BJ (cell line): ENCODE measurements at regions of chr3 and their contacts with region 1.

Region 1: DNA sequence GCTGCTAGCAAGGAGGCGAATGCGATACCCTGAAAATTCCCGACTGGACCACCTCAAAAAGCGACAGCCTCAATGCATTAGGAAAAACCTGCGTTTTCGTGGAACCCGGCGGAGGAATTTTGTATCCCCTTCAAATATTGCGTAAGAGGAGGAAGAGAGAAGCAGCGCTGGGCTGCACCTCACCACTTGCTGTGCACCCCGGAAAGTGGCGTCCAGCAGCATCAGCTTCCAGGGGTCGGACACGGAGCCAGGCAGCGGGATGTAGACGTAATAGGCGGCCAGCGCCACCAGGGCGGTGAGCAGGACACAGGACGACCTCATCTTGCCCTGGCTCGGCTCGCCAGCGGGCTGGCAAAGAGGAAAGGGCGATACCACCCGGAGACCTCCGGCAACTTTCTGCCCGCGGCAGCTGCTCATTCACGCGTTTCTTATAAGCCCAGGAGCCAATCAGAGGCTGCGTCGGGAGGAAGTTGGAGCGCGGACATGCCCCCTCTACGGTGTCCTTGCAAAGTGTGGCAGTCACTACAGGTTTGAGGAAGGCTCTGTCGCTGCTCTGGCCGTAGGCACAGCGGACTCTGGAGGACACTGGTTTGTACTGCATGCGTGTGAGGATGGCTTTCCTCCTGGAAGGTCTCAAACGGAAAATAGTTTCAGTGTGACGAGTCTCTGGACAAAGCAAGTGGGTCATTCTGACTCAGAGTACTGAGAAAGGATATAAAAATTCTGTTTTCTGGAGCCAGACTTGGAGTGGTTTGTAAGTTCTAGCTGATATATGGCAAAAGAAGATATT is at the start of gene NCEH1:
- DNase-seq: peak; percentile 99
- H3K4me3 ChIP-seq: peak within 1 kb of the TSS; percentile 78
- H3K27me3 ChIP-seq: no peaks in the 10 kb centered on the region
- CTCF ChIP-seq: peak; percentile 82
- polyA plus RNA-seq, gene NCEH1: 14.8 and 17.8 TPM in 2 replicates

Region 2: DNA sequence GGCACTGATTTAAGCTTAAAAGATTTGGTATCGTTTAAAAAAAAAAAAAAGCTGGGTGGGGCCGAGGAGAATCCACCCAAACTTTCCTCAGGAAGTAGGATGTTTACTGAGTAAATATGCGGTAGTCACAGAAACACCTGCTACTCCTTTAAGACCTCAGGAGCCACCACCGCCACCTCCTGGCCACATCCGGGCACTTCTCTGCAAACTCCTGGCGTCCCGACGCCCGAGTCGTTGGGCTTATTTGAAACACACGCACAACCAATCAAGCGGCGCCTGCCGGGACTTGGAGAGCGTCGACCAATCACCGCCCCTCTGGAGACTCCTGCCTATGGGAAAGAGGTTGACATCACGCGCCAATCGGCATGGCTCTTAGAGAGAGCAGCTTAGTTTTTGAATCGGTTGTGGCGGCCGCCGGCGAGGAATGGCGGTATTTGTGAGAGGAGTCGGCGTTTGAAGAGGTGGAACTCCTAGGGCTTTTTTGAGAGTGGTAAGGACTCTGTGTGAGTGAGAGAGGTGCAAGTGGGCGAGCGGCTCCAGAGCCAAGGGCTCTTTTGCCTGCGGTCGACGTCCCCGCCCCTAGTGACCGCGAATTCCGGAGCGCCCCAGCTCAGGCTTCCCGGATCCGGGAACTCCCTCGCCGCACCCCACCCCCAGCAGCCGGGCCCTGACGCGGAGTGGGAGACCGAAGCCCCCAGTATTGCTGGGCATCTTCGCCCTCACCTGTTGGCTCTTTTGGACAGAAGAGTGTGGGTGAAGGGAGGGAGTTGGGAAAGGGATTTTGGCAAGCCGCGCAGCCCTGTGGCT is 39.7 kb after region 1 on chr3 and contains the start of gene ECT2:
- CTCF ChIA-PET with region 1: interaction called, 15 read pairs
- POLR2A ChIA-PET with region 1: interaction called, 3 read pairs
- DNase-seq: peak; percentile 100
- H3K4me3 ChIP-seq: peak within 1 kb of the TSS; percentile 78
- H3K27me3 ChIP-seq: no peaks in the 10 kb centered on the region
- CTCF ChIP-seq: peak; percentile 74
- polyA plus RNA-seq, gene ECT2: 15.3 and 30.9 TPM in 2 replicates

Region 3: DNA sequence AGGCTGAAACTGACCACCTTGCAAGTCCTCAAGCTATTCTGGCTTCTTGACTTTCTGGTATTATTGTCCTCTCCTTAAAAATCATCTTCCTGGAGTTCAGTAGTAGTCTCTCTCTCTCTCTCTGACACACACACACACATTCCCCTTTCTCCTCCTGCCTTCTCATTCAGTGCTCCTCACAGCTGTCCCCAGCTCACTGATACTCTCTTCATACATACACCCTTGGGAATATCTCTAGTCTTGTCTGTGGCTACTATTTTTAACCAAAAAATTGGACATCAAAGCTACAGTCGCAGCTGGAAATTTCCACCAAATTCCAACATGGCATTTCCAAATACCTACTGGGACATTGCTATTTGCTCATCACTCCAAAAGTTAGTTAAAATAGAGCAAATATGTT is 218.6 kb after region 1 on chr3:
- CTCF ChIA-PET with region 1: no interaction called
- POLR2A ChIA-PET with region 1: no interaction called
- DNase-seq: no peak
- H3K4me3 ChIP-seq: no peak overlapping the region
- H3K27me3 ChIP-seq: no peaks in the 10 kb centered on the region; the same call in 1 of the 2 replicates
- CTCF ChIP-seq: no peak